ENCODE measurements at regions of chr2 and their contacts with region 1.

Region 1: DNA sequence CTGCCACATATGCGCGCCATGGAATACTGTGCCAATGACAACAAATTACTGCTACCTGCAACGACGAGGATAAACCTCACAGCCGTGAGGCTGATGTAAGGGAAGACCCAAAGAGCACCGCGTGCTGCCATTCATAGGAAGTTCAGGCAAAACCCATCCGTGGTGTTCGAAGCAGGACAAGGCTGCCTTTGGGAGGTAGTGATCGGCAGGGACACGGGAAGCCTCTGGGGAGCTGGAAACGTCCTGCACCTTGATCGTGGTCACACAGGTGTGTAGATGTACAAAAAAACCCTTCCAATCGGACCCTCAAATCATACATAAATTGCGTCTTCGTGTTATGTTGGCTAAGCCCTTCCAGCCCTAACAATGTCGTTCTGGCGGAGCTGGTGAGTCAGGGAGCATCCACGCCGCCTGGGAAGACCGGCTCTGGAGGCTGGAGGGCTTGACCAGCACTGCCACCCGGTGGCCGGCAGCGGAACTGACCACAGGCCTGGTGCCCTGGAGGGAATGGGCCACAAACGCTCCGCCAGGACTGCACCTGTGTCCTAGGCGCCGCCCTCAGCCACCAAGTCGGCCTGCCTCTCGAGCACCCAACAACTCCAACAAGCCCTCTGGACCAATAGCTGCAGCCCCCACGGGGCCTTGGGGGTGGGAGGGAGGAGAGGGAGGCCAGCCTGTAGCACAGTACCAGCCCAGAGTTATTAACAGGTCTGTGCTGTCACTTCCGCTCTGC is 4.1 kb upstream of the NEURL3 start:
- DNase-seq: peak; percentile 59
- ATAC-seq: peak; percentile 79
- H3K4me3 ChIP-seq: no peak overlapping the region
- H3K27ac ChIP-seq: no peak overlapping the region
- H3K4me1 ChIP-seq: peaks cover 18% of the 10 kb centered on the region
- H3K27me3 ChIP-seq: no peaks in the 10 kb centered on the region
- CTCF ChIP-seq: peak; percentile 93 to 99 (median 99); a peak in 5 of 6 replicates
- EP300 ChIP-seq: no peak
- POLR2A ChIP-seq: no peak
- RAD21 ChIP-seq: peak; percentile 95

Region 2: GRCh38 chr2:96413323-96413722 is 96.0 kb before region 1 on chr2:
- CTCF ChIA-PET with region 1: interaction called, 307 read pairs
- POLR2A ChIA-PET with region 1: no interaction called
- RAD21 ChIA-PET with region 1: interaction called, 144 read pairs
- SMC1A ChIA-PET with region 1: interaction called, 123 read pairs
- in situ Hi-C with region 1: loop called (anchors 5 kb)
- intact Hi-C with region 1: no loop called
- DNase-seq: no peak
- ATAC-seq: no peak
- H3K4me3 ChIP-seq: no peak overlapping the region
- H3K27ac ChIP-seq: no peak overlapping the region
- H3K4me1 ChIP-seq: no peaks in the 10 kb centered on the region
- H3K27me3 ChIP-seq: no peaks in the 10 kb centered on the region
- CTCF ChIP-seq: no peak
- EP300 ChIP-seq: no peak
- POLR2A ChIP-seq: no peak
- RAD21 ChIP-seq: no peak

Region 3: GRCh38 chr2:96477458-96477857 is 31.8 kb before region 1 on chr2:
- CTCF ChIA-PET with region 1: interaction called, 31 read pairs
- POLR2A ChIA-PET with region 1: interaction called, 5 read pairs
- RAD21 ChIA-PET with region 1: interaction called, 8 read pairs
- SMC1A ChIA-PET with region 1: interaction called, 4 read pairs
- in situ Hi-C with region 1: loop called (anchors 5 kb)
- intact Hi-C with region 1: no loop called
- DNase-seq: no peak
- ATAC-seq: no peak
- H3K4me3 ChIP-seq: no peak overlapping the region
- H3K27ac ChIP-seq: no peak overlapping the region
- H3K4me1 ChIP-seq: no peaks in the 10 kb centered on the region
- H3K27me3 ChIP-seq: no peaks in the 10 kb centered on the region
- CTCF ChIP-seq: no peak
- EP300 ChIP-seq: no peak
- POLR2A ChIP-seq: no peak
- RAD21 ChIP-seq: no peak

Region 4: DNA sequence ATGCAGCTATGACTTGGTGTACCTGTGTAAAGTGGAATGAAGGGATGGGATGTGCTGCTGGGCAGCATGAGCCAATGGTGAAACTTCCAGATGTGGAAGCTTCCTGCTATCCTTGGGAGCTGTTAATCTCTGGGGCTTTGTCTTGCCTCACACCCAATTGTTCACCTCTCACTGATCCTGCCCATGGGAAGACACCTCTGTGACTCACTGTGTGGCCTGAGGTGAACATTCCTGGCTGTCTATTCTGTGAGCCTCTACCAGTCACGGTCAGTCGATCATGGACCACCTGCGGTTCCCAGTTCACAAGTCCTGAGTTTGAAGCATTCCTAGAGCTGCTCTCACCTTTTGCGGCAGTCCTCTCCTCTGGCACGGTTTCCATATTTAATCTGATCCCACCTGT is 16.2 kb before region 1 on chr2:
- CTCF ChIA-PET with region 1: interaction called, 15 read pairs
- POLR2A ChIA-PET with region 1: interaction called, 7 read pairs
- RAD21 ChIA-PET with region 1: interaction called, 9 read pairs
- SMC1A ChIA-PET with region 1: interaction called, 16 read pairs
- in situ Hi-C with region 1: no loop called
- intact Hi-C with region 1: no loop called
- DNase-seq: no peak
- ATAC-seq: no peak
- H3K4me3 ChIP-seq: no peak overlapping the region
- H3K27ac ChIP-seq: no peak overlapping the region
- H3K4me1 ChIP-seq: peaks cover 11% of the 10 kb centered on the region; the same call in 1 of the 2 replicates
- H3K27me3 ChIP-seq: no peaks in the 10 kb centered on the region
- CTCF ChIP-seq: no peak
- EP300 ChIP-seq: no peak
- POLR2A ChIP-seq: no peak
- RAD21 ChIP-seq: no peak

Region 5: GRCh38 chr2:96536445-96537065 is 27.3 kb after region 1 on chr2 and contains the start of gene ARID5A:
- CTCF ChIA-PET with region 1: interaction called, 51 read pairs
- POLR2A ChIA-PET with region 1: interaction called, 8 read pairs
- RAD21 ChIA-PET with region 1: interaction called, 60 read pairs
- SMC1A ChIA-PET with region 1: interaction called, 7 read pairs
- in situ Hi-C with region 1: no loop called
- intact Hi-C with region 1: no loop called
- DNase-seq: peak; percentile 44
- ATAC-seq: peak; percentile 78
- H3K4me3 ChIP-seq: peak within 1 kb of the TSS; percentile 94
- H3K27ac ChIP-seq: peak within 1 kb of the TSS; percentile 92
- H3K4me1 ChIP-seq: peaks cover 43% of the 10 kb centered on the region
- H3K27me3 ChIP-seq: no peaks in the 10 kb centered on the region
- CTCF ChIP-seq: peak in 1 of 3 experiments; percentile 26; a peak in 1 of 6 replicates
- EP300 ChIP-seq: no peak
- POLR2A ChIP-seq: peak; percentile 90
- RAD21 ChIP-seq: no peak
- polyA plus RNA-seq, gene ARID5A: 0.76 to 3.8 TPM

Region 6: DNA sequence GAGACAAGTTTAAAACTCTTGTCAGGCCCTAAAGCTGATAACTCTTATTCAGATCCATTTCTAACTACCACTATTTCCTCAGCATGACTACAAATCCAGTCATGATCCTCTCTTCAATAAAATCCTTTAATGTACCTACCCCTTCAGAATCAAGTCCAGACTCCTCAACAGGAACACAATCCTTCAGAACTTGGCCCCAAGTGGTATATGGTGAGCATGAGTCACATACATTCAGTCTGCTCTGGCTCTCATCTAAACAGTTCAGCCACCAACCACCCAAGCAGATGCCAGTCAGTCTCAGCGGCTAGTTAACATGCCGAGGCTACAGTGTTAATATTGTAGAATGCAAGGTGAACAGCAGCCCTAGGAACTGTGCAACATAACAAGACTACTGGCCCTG is 220.9 kb after region 1 on chr2:
- CTCF ChIA-PET with region 1: no interaction called
- POLR2A ChIA-PET with region 1: no interaction called
- RAD21 ChIA-PET with region 1: no interaction called
- SMC1A ChIA-PET with region 1: no interaction called
- in situ Hi-C with region 1: no loop called
- intact Hi-C with region 1: no loop called
- DNase-seq: no peak
- ATAC-seq: no peak
- H3K4me3 ChIP-seq: no peak overlapping the region
- H3K27ac ChIP-seq: no peak overlapping the region
- H3K4me1 ChIP-seq: no peaks in the 10 kb centered on the region
- H3K27me3 ChIP-seq: no peaks in the 10 kb centered on the region
- CTCF ChIP-seq: no peak
- EP300 ChIP-seq: no peak
- POLR2A ChIP-seq: no peak
- RAD21 ChIP-seq: no peak

Measured in GM12878 (cell line).